ENCODE measurements at regions of chr3 and their contacts with region 1.

Region 1: DNA sequence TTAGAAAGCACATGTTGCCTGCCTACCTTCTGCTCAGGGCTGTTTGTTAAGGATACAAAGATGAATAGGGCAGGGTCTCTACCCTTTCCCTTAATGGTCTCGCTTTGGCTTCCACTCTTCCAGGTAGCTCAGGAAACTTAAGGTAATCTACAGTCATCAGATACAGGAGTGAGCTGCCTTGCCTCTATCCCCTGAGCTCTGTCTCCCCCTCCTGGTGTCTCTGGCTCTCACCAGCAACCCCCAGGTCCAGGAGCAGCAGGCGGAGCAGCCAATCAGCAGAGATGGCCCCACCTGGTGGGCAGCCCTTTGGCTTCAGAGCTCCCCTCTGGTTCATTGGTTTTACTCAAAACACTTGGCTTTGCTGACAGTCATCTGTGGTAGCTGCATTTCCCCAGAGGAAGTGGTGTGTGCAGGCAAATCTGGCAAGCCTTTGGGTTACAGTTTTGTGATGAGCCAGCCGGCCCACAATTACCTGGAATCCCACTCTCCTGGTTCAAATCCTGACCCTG is 8.5 kb upstream of the CX3CR1 start:
- DNase-seq: peak; percentile 80
- H3K4me3 ChIP-seq: no peak overlapping the region
- H3K27ac ChIP-seq: no peak overlapping the region
- H3K4me1 ChIP-seq: no peaks in the 10 kb centered on the region
- H3K27me3 ChIP-seq: no peaks in the 10 kb centered on the region; the same call in 1 of the 2 replicates

Region 2: DNA sequence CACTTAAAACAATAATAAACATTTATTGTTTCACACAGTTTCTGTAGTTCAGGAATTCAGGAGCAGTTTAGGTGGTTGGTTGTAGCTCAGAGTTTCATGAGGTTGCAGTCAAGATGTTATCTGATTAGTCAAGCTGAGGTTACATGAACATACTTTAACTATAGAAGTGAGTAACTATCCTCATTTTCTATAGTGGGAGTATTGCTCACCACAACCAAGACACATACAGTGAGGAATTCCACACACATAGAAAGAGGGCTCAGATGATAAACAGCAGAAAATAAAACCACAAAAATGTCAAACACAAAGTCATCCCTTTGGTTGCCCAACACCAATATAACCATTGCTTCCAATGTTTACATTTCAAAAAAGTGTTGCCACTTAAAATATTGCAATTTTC is 250.2 kb before region 1 on chr3:
- in situ Hi-C with region 1: no loop called
- DNase-seq: peak; percentile 87
- H3K4me3 ChIP-seq: no peak overlapping the region
- H3K27ac ChIP-seq: peak overlapping the region; percentile 52
- H3K4me1 ChIP-seq: peaks cover 13% of the 10 kb centered on the region; the same call in 1 of the 2 replicates
- H3K27me3 ChIP-seq: peaks cover 11% of the 10 kb centered on the region

Region 3: GRCh38 chr3:39096775-39097174 is 191.6 kb before region 1 on chr3:
- in situ Hi-C with region 1: loop called (anchors 10 kb)
- DNase-seq: peak; percentile 58
- H3K4me3 ChIP-seq: no peak overlapping the region
- H3K27ac ChIP-seq: no peak overlapping the region; the same call in 1 of the 2 replicates
- H3K4me1 ChIP-seq: peaks cover 10% of the 10 kb centered on the region; the same call in 1 of the 2 replicates
- H3K27me3 ChIP-seq: no peaks in the 10 kb centered on the region

Measured in GM23248 (cell line).